MCF 10A (cell line): ENCODE measurements at regions of chr11 and their contacts with region 1.

Region 1: GRCh38 chr11:13335319-13335718 is 57.7 kb downstream of the BMAL1 start:
- DNase-seq: peak; percentile 88
- H3K4me3 Mint-ChIP-seq: no peak overlapping the region
- H3K27ac Mint-ChIP-seq: peak overlapping the region; percentile 20
- H3K4me1 Mint-ChIP-seq: peaks cover 62% of the 10 kb centered on the region
- H3K27me3 Mint-ChIP-seq: no peaks in the 10 kb centered on the region
- CTCF ChIP-seq: peak; percentile 73

Region 2: DNA sequence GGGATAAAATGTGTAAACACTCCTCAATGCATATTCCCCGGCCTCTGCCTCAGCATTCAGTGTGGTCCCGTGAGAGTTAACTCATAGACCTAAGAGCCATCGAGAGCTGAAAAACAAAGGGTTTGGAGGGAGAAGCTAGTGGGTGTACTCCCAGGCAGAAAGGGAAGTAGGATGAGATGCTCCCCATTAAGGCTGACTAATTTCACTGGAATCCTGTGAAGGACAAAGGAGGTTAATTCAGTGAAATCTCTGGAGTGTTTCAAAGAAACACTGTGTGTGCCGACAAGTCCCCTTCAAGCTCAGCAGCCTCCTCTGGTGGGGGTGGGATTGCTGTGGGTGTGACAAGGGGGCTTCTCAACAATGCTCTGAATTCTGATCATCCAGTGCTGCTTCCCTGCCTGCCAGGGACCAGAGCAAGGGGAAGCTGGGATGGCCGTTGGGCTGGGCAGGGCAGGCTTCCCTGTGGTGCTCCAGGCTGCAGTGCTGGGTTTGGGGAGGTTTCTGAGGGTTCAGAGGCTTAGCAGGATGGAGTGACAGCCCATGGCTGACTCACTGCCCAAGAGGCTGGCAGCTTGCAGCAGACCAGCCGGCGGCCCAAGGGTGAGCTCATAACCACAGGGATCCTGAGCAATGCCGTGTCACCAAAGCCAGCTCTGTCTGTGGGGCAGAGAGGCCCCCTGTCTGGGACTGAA is 119.2 kb before region 1 on chr11:
- CTCF ChIA-PET with region 1: interaction called, 311 read pairs
- POLR2A ChIA-PET with region 1: interaction called, 59 read pairs
- intact Hi-C with region 1: loop called (anchors 1 kb)
- DNase-seq: peak; percentile 92
- H3K4me3 Mint-ChIP-seq: peak overlapping the region; percentile 32
- H3K27ac Mint-ChIP-seq: peak overlapping the region; percentile 85
- H3K4me1 Mint-ChIP-seq: peaks cover 26% of the 10 kb centered on the region
- H3K27me3 Mint-ChIP-seq: no peaks in the 10 kb centered on the region
- CTCF ChIP-seq: no peak

Region 3: GRCh38 chr11:13249996-13250395 is 85.3 kb before region 1 on chr11:
- CTCF ChIA-PET with region 1: interaction called, 242 read pairs
- POLR2A ChIA-PET with region 1: interaction called, 204 read pairs
- intact Hi-C with region 1: loop called (anchors 1 kb)
- DNase-seq: peak; percentile 36
- H3K4me3 Mint-ChIP-seq: no peak overlapping the region
- H3K27ac Mint-ChIP-seq: no peak overlapping the region
- H3K4me1 Mint-ChIP-seq: no peaks in the 10 kb centered on the region
- H3K27me3 Mint-ChIP-seq: no peaks in the 10 kb centered on the region
- CTCF ChIP-seq: peak; percentile 52

Region 4: GRCh38 chr11:13289081-13289480 is 46.2 kb before region 1 on chr11:
- CTCF ChIA-PET with region 1: interaction called, 18 read pairs
- POLR2A ChIA-PET with region 1: interaction called, 6 read pairs
- intact Hi-C with region 1: no loop called
- DNase-seq: peak; percentile 51
- H3K4me3 Mint-ChIP-seq: no peak overlapping the region
- H3K27ac Mint-ChIP-seq: no peak overlapping the region
- H3K4me1 Mint-ChIP-seq: peaks cover 44% of the 10 kb centered on the region
- H3K27me3 Mint-ChIP-seq: no peaks in the 10 kb centered on the region
- CTCF ChIP-seq: no peak

Region 5: GRCh38 chr11:13316528-13316961 is 18.8 kb before region 1 on chr11:
- CTCF ChIA-PET with region 1: interaction called, 29 read pairs
- POLR2A ChIA-PET with region 1: interaction called, 13 read pairs
- intact Hi-C with region 1: no loop called
- DNase-seq: peak; percentile 85
- H3K4me3 Mint-ChIP-seq: no peak overlapping the region
- H3K27ac Mint-ChIP-seq: peak overlapping the region; percentile 87
- H3K4me1 Mint-ChIP-seq: peaks cover 64% of the 10 kb centered on the region
- H3K27me3 Mint-ChIP-seq: no peaks in the 10 kb centered on the region
- CTCF ChIP-seq: no peak